ENCODE measurements at regions of chr20 and their contacts with region 1.

Region 1: DNA sequence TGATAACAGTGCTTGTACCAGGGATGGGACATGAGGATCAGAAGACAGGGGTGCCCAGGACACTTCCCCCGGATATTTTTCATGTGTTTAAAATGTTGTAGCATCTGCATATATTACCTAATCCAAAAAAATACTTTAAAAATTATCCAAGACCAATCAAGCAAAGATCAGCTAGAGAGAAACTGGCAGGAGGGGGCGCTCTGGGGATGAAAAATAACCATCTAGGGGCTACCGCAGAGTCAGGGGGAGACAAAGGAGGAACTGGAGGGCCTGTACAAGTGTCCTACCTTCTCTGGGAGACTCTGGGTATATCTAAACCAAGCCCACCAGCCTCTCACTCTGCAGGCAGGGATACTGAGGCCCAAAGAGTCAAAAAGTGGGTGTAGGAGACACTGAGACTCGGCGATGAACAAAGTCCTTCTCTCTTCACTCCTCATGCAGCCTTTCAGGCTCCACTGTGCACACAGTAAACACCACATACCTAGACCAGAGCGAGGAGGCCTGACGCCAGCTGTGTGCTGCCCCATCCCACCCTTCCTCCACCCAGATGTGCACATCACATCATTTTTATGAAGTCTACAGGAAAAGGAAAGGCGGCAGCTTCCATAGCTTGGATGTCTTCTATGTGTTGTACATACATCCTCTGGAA is 9.8 kb downstream of the RIMS4 start:
- DNase-seq: no peak
- H3K4me3 ChIP-seq: no peak overlapping the region
- H3K27ac ChIP-seq: no peak overlapping the region
- H3K4me1 ChIP-seq: no peaks in the 10 kb centered on the region
- H3K27me3 ChIP-seq: peaks cover 2 to 3% of the 10 kb centered on the region in 2 experiments
- CTCF ChIP-seq: peak; percentile 20 to 35
- POLR2A ChIP-seq: no peak

Region 2: GRCh38 chr20:44104798-44105517 is 695.6 kb before region 1 on chr20:
- CTCF ChIA-PET with region 1: no interaction called
- POLR2A ChIA-PET with region 1: no interaction called
- dilution Hi-C with region 1: no loop called
- intact Hi-C with region 1: no loop called
- DNase-seq: peak; percentile 68
- H3K4me3 ChIP-seq: no peak overlapping the region
- H3K27ac ChIP-seq: no peak overlapping the region
- H3K4me1 ChIP-seq: no peaks in the 10 kb centered on the region
- H3K27me3 ChIP-seq: peaks cover 11 to 33% of the 10 kb centered on the region in 2 experiments
- CTCF ChIP-seq: no peak
- POLR2A ChIP-seq: no peak

Region 3: DNA sequence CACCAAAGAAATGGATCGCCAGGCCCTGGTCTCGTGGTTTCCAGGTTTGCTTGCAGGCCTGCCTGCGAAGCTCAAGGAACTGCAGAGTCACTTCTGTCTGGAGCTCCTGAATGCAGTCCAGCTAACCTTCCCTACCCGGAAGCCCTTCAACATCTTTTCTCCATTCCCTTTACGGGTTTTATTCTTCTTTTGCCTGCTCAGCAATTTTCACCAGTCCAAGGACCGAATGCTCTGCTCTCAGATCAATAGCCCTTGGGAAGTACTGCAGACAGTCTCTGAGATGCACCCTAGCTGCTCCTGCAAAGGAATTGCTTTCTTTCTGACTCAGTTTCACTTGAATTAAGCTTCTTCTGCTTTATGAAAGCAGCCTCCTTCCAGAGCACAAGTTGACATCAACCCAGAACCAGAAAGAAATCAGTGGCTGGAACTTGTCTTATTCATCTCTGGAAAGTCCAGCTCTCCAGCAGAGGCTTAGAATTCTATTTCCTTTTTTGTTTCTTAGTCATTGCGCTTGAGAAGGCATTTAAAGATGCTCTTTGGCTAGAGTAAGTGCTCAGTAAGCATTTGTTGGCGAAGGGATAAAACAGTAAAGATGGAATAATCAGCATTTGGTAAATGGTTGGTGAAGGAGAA is 66.3 kb after region 1 on chr20:
- CTCF ChIA-PET with region 1: interaction called, 12 read pairs
- POLR2A ChIA-PET with region 1: no interaction called
- dilution Hi-C with region 1: no loop called
- intact Hi-C with region 1: loop called (anchors 1 kb)
- DNase-seq: no peak
- H3K4me3 ChIP-seq: no peak overlapping the region
- H3K27ac ChIP-seq: no peak overlapping the region
- H3K4me1 ChIP-seq: no peaks in the 10 kb centered on the region
- H3K27me3 ChIP-seq: peaks cover 8 to 14% of the 10 kb centered on the region in 2 experiments
- CTCF ChIP-seq: no peak
- POLR2A ChIP-seq: no peak

Region 4: GRCh38 chr20:44979090-44979621 is 178.6 kb after region 1 on chr20:
- CTCF ChIA-PET with region 1: no interaction called
- POLR2A ChIA-PET with region 1: no interaction called
- dilution Hi-C with region 1: no loop called
- intact Hi-C with region 1: no loop called
- DNase-seq: no peak
- H3K4me3 ChIP-seq: no peak overlapping the region
- H3K27ac ChIP-seq: no peak overlapping the region
- H3K4me1 ChIP-seq: no peaks in the 10 kb centered on the region
- H3K27me3 ChIP-seq: no peaks in the 10 kb centered on the region
- CTCF ChIP-seq: no peak
- POLR2A ChIP-seq: no peak

Measured in endothelial cell of umbilical vein (primary cell).